Activated CD8-positive, alpha-beta T cell treated with anti-CD3 and anti-CD28 coated beads for 36 hours (primary cell): ENCODE measurements at regions of chr11 and their contacts with region 1.

Region 1: DNA sequence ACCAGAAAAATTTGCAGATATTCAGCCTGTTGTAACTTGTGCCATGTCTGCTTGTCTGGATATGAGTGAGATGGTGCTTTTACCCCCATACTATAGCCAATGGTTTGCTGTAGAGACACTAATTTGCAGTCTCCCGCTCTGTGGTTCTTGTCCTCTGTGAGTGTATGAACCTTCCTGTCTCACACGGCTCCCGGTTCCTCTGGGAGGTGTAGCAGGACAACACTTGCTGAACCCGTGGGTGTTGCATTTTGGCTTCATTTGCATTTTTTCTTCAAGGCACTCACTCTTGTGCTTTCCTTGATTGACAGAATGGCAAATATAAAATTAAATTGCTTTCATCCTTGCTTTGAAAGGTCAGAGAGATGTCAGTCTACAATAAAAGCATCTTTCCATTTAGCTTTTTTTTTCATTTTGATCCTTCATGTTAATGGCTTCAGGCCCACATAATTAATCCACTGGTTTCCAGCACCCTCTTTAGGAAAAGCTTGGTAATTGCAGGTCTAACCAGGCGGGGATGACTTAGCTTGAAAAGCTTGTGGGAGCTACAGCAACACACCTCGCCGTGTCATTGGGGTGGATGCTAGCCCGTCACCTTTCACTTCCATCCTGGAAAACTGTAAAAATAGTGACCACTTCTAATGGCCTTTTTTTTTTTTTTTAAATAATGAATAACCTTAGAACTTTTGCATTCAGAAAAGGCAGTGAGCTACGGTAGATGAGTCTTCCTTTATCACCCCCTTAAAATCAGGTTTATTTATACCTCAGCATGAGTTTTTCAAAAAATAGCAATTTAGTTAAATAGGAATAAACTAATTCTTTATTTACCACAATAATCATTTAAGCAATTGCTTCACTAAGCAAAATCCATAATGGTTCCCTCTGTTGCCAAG is 27.4 kb upstream of the ST14 start:
- DNase-seq: peak; percentile 62
- ATAC-seq: peak; percentile 97
- H3K4me3 Mint-ChIP-seq: no peak overlapping the region
- H3K27ac Mint-ChIP-seq: no peak overlapping the region
- H3K4me1 Mint-ChIP-seq: no peaks in the 10 kb centered on the region
- H3K27me3 Mint-ChIP-seq: no peaks in the 10 kb centered on the region
- CTCF ChIP-seq: peak; percentile 79

Region 2: GRCh38 chr11:129917231-129917630 is 215.0 kb before region 1 on chr11:
- CTCF ChIA-PET with region 1: interaction called, 178 read pairs
- POLR2A ChIA-PET with region 1: no interaction called
- intact Hi-C with region 1: loop called (anchors 2 kb)
- DNase-seq: no peak
- ATAC-seq: no peak
- H3K4me3 Mint-ChIP-seq: no peak overlapping the region
- H3K27ac Mint-ChIP-seq: no peak overlapping the region
- H3K4me1 Mint-ChIP-seq: peaks cover 4% of the 10 kb centered on the region
- H3K27me3 Mint-ChIP-seq: no peaks in the 10 kb centered on the region
- CTCF ChIP-seq: no peak

Region 3: DNA sequence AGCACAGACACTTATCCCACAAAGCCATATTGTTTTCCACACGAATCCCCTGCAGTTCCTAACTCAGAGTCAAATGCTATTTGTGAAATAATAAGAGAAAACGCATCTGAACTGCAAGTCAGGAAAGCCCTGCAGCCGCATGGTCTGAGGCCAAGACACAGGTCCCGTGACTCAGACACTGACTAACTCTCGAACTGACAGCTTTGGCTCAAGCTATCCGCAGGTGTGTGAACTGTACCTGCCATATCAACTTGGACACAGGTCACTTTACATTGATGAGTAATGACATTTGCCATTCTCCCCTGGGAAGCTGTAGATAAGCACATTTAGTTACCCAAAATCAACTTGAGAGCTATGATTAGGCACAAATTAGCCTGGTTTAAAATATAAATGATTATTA is 201.9 kb before region 1 on chr11:
- CTCF ChIA-PET with region 1: interaction called, 178 read pairs
- POLR2A ChIA-PET with region 1: interaction called, 4 read pairs
- intact Hi-C with region 1: no loop called
- DNase-seq: no peak
- ATAC-seq: no peak
- H3K4me3 Mint-ChIP-seq: no peak overlapping the region
- H3K27ac Mint-ChIP-seq: no peak overlapping the region
- H3K4me1 Mint-ChIP-seq: no peaks in the 10 kb centered on the region
- H3K27me3 Mint-ChIP-seq: no peaks in the 10 kb centered on the region
- CTCF ChIP-seq: no peak

Region 4: GRCh38 chr11:129992161-129992944 is 139.9 kb before region 1 on chr11:
- CTCF ChIA-PET with region 1: interaction called, 54 read pairs
- POLR2A ChIA-PET with region 1: no interaction called
- intact Hi-C with region 1: no loop called
- DNase-seq: peak; percentile 71
- ATAC-seq: peak; percentile 95
- H3K4me3 Mint-ChIP-seq: no peak overlapping the region
- H3K27ac Mint-ChIP-seq: no peak overlapping the region
- H3K4me1 Mint-ChIP-seq: peaks cover 11% of the 10 kb centered on the region
- H3K27me3 Mint-ChIP-seq: no peaks in the 10 kb centered on the region
- CTCF ChIP-seq: peak; percentile 34

Region 5: DNA sequence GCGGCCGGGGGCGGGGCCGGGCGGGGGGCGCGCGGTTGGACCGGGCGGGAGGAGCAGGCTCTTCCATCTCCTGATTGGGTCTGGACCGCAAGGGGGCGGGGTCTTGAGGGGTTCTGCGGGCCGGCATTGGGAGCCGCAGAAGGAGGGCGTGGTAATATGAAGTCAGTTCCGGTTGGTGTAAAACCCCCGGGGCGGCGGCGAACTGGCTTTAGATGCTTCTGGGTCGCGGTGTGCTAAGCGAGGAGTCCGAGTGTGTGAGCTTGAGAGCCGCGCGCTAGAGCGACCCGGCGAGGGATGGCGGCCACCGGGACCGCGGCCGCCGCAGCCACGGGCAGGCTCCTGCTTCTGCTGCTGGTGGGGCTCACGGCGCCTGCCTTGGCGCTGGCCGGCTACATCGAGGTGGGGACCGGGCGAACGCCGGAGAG is 62.5 kb before region 1 on chr11 and contains the start of gene APLP2:
- CTCF ChIA-PET with region 1: interaction called, 18 read pairs
- POLR2A ChIA-PET with region 1: no interaction called
- intact Hi-C with region 1: no loop called
- DNase-seq: peak; percentile 99
- ATAC-seq: peak; percentile 97
- H3K4me3 Mint-ChIP-seq: peak within 1 kb of the TSS; percentile 85
- H3K27ac Mint-ChIP-seq: peak within 1 kb of the TSS; percentile 87
- H3K4me1 Mint-ChIP-seq: peaks cover 20% of the 10 kb centered on the region
- H3K27me3 Mint-ChIP-seq: peaks cover 9% of the 10 kb centered on the region
- CTCF ChIP-seq: no peak
- total RNA-seq, gene APLP2: 25.5 to 29.8 TPM

Region 6: DNA sequence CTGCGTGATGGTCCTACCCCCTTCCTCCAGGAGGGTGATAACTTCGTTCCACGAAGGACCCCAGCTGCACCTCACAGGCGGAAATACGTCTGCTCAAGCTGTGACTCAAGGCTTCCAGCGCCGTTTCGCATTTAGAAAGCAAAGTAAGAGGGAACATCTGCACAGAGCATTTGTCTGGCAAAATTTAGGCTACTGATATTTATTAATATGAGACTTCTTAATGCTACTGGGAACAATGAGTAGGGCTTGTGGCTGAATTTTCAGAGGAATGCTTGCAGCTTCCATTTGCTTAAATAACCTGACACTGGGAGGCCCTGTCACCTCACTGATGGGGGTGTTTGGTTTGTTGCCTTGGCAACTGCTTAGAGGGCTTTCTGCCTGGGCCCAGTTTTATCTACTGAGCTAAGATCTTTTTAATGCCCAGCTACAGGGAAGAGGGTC is 12.7 kb after region 1 on chr11:
- CTCF ChIA-PET with region 1: interaction called, 12 read pairs
- POLR2A ChIA-PET with region 1: no interaction called
- intact Hi-C with region 1: no loop called
- DNase-seq: no peak
- ATAC-seq: no peak
- H3K4me3 Mint-ChIP-seq: no peak overlapping the region
- H3K27ac Mint-ChIP-seq: no peak overlapping the region
- H3K4me1 Mint-ChIP-seq: peaks cover 6% of the 10 kb centered on the region
- H3K27me3 Mint-ChIP-seq: no peaks in the 10 kb centered on the region
- CTCF ChIP-seq: no peak

Region 7: DNA sequence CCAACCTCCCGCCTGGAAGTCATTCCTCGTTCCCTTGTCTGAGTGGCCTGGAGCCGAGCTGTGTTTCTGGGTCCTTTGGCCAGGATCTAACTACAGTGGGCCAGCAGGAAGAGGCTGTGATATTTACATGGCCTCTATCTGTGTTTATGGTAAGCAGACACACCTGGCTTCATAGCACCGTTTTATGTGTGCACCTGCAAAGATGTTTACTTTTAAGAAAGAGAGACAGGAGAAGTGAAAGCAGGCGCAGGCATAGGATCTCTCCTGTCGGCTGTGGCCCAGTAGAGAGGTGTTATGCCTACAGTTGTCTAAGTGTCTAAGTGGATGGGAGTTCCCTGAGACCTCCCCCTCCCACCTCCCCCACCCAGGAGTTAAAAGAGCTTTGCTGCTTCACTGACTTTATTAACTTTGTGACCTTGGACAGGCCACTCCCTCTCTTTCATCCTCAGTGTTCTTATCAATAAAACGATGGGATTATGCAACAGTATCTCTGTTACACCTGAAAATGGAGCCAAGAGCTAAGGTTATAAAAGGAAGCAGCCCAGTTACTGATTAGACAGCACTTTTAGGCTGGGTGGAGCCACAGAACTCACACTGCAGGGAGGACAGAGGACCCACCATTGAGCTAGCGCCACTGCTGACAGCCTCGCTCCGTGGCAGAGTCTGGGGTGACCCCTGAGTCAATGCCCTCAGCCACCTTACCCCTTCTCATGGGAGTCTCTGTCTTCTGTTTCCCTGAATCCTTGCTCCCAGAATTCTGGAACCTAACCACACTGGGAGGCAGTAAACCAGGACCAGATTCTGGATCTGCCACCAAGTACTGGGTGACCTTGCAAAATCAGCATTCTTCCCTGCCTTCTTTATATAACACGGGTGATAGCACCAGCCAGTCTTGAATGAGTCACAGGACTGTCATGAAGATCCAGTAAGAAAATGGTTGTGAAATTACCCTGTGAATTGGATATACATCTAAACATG is 49.4 kb after region 1 on chr11:
- CTCF ChIA-PET with region 1: no interaction called
- POLR2A ChIA-PET with region 1: no interaction called
- intact Hi-C with region 1: no loop called
- DNase-seq: no peak
- ATAC-seq: no peak
- H3K4me3 Mint-ChIP-seq: no peak overlapping the region
- H3K27ac Mint-ChIP-seq: no peak overlapping the region
- H3K4me1 Mint-ChIP-seq: no peaks in the 10 kb centered on the region
- H3K27me3 Mint-ChIP-seq: no peaks in the 10 kb centered on the region
- CTCF ChIP-seq: no peak

Region 8: GRCh38 chr11:130223291-130223971 is 91.2 kb after region 1 on chr11:
- CTCF ChIA-PET with region 1: no interaction called
- POLR2A ChIA-PET with region 1: no interaction called
- intact Hi-C with region 1: no loop called
- DNase-seq: peak; percentile 8
- ATAC-seq: peak; percentile 58
- H3K4me3 Mint-ChIP-seq: no peak overlapping the region
- H3K27ac Mint-ChIP-seq: no peak overlapping the region
- H3K4me1 Mint-ChIP-seq: peaks cover 10% of the 10 kb centered on the region
- H3K27me3 Mint-ChIP-seq: no peaks in the 10 kb centered on the region
- CTCF ChIP-seq: no peak